Activated CD8-positive, alpha-beta T cell treated with anti-CD3 and anti-CD28 coated beads for 36 hours (primary cell): ENCODE measurements at regions of chr11 and their contacts with region 1.

Region 1: DNA sequence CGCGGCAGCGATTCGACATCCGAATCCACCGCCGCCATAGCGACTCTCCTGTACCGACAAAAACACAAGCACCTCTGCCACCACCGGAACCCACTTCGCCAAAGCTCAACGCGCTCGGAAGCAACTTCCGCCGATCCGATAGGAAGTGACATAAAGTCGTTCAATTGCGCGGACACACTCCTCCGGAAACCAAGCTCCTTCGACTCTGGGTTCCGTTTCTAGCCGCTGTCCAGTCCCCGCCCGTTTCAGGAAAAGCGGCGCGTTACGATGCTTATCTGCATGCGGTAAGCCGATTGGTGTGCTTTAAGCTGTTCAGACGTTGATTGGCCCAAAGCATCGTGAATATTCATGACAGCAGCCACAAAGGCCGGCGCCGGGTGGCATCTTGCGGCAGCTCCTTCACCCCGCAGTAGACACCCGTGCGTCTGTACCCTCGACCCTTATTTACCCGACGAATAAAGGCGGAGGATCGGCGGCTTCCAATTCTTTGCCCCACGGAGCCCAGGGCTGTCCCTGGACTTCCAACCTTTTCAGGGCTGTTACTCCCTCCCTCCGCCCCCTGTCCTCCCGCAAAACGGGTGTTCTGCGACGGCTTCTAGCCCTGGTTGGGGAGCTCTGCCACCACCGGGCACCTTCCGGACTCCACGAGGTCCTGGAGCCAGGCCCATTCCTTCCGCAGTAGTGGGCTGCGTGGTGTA is at the start of gene TUT1:
- DNase-seq: peak; percentile 98
- ATAC-seq: peak; percentile 91
- H3K4me3 Mint-ChIP-seq: peak within 1 kb of the TSS; percentile 100
- H3K27ac Mint-ChIP-seq: peak within 1 kb of the TSS; percentile 98
- H3K4me1 Mint-ChIP-seq: peaks cover 49% of the 10 kb centered on the region
- H3K27me3 Mint-ChIP-seq: no peaks in the 10 kb centered on the region
- CTCF ChIP-seq: no peak
- total RNA-seq, gene TUT1: 34.4 to 38.0 TPM

Region 2: DNA sequence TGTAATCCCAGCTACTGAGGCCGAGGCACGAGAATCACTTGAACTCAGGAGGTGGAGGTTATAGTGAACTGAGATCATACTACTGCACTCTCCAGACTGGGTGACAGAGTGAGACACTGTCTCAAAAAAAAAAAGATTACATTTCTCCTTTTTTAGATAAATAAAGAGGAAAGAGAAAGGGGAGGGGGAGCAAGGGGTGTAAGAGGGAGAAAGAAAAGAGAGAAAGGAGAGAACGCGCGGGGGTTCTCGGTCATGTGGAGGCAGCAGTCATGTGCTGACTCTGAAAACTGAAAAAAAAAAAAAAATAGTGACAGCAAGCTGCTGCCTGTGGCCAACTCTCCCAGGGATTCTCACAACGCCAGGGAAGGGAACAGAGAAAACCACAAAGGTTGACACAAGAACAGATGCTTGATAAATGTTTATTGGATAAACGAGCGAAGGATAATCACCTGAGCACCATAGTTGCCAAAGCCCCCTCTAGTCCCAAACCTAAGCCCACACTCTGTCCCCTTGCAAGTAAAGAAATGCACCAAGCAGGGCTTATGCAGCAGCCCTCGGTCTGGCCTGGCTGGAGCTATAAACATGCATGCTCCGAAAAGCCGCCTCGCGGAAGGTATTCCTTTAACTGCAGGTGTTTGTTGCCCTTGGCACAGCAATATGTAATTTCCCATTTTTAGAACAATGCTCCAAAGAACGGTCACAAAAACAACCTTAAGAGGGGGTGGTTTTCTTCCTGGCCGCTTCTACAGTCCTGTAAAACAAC is 158.3 kb before region 1 on chr11:
- CTCF ChIA-PET with region 1: no interaction called
- POLR2A ChIA-PET with region 1: no interaction called
- intact Hi-C with region 1: no loop called
- DNase-seq: no peak
- ATAC-seq: no peak
- H3K4me3 Mint-ChIP-seq: no peak overlapping the region
- H3K27ac Mint-ChIP-seq: no peak overlapping the region
- H3K4me1 Mint-ChIP-seq: peaks cover 31% of the 10 kb centered on the region
- H3K27me3 Mint-ChIP-seq: peaks cover 2% of the 10 kb centered on the region
- CTCF ChIP-seq: no peak

Region 3: DNA sequence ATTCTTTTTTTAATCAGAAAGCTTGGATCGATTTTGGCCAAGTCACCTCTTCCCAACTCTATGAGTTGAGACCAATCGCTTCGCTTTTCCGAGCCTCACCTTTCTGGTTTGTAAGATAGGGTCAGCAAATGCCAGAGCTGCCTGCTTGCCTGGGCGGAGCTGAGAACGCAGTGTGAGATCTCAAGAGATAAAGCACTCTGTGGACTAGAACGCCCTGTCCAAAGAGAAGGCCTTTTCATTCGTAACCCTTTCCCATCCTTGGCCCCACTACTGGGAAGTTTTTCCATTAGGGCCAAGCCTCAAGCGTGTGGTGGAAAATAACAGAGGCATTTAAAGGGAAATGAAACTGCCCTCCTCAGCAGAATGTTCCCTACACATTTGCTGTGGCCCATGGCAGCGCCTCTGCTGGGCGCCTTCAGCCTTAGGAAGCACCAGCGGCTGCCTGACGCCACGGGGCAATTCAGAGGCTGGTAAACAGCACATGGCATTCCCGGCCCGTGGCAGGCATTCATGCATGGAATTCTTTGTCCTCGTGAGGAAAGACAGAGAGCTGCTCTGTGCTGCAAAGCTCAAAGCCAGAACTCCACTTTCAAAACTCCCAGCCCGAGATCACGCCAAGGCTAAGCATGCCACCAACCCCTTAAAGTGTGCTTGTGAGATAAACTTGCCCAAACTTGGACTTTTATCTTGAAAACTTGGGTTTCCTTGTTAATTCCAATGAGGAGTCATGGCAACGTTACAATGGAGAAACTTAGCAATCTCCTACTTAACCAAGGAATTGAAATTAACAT is 83.1 kb before region 1 on chr11:
- CTCF ChIA-PET with region 1: no interaction called
- POLR2A ChIA-PET with region 1: no interaction called
- intact Hi-C with region 1: no loop called
- DNase-seq: peak; percentile 7
- ATAC-seq: no peak
- H3K4me3 Mint-ChIP-seq: no peak overlapping the region
- H3K27ac Mint-ChIP-seq: no peak overlapping the region
- H3K4me1 Mint-ChIP-seq: no peaks in the 10 kb centered on the region
- H3K27me3 Mint-ChIP-seq: peaks cover 7% of the 10 kb centered on the region
- CTCF ChIP-seq: peak; percentile 22

Region 4: DNA sequence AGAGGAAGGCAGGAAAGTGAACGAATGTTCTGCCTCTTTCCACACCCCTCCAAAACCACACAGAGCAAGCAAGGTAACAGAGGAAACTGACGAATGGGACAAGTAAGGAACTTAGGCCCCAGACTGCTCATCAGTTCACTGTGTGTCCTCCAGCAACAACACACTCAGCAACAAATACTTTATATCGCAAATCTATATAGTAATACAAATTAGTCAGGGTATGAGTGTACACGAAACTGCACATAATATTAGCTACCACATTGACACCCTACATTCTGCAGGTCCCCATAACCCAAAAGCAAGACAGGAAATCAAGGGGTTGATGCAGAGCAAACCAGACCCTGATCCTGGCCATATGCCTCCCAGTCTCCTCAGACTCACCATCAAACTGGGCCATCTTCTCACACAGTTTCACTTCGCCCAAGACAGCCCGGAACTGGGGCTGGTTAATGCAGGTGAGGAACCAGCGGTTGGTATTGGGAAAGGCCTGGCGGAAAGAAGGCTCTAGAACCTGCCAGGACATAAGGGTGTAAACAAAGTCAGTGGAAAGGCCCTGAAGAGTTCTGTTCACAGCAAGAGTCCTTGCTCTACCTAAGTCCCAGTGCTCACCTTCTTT is 24.5 kb before region 1 on chr11:
- CTCF ChIA-PET with region 1: interaction called, 8 read pairs
- POLR2A ChIA-PET with region 1: interaction called, 15 read pairs
- intact Hi-C with region 1: no loop called
- DNase-seq: no peak
- ATAC-seq: peak; percentile 49
- H3K4me3 Mint-ChIP-seq: no peak overlapping the region
- H3K27ac Mint-ChIP-seq: peak overlapping the region; percentile 61
- H3K4me1 Mint-ChIP-seq: peaks cover 57% of the 10 kb centered on the region
- H3K27me3 Mint-ChIP-seq: no peaks in the 10 kb centered on the region
- CTCF ChIP-seq: no peak

Region 5: GRCh38 chr11:62621567-62622470 is 30.2 kb after region 1 on chr11 and contains the start of gene B3GAT3:
- CTCF ChIA-PET with region 1: interaction called, 3 read pairs
- POLR2A ChIA-PET with region 1: interaction called, 19 read pairs
- intact Hi-C with region 1: no loop called
- DNase-seq: peak; percentile 98
- ATAC-seq: peak; percentile 94
- H3K4me3 Mint-ChIP-seq: peak within 1 kb of the TSS; percentile 88
- H3K27ac Mint-ChIP-seq: peak within 1 kb of the TSS; percentile 91
- H3K4me1 Mint-ChIP-seq: peaks cover 24% of the 10 kb centered on the region
- H3K27me3 Mint-ChIP-seq: no peaks in the 10 kb centered on the region
- CTCF ChIP-seq: no peak
- total RNA-seq, gene B3GAT3: 59.1 to 61.4 TPM

Region 6: DNA sequence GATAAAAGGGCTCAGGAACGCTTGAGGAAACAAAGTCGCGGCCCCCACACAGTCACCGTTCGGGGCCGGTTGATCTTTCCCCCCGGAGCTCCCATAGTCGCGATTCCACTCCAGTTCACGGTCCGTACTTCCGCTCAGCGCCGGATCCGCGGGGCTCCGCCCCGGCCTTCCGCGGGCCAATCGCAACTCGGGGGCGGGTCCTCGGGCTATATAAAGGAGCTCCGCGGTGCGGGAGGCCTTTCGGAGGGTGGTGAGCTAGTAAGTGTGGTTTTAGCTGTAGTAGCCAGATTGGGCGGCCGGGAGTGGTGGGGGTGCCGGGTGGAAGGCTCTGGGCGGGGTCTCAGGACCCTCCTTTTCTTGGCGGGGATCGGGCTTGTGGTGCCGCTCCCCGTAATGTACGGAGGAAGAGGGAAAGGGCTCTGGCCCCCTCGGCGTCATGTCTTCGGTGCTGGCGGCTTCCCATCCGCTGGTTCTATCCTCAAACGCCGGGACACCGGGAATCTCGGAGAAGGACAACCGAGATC is 73.5 kb after region 1 on chr11 and contains the starts of genes C11orf98 and CSKMT:
- CTCF ChIA-PET with region 1: interaction called, 20 read pairs
- POLR2A ChIA-PET with region 1: interaction called, 79 read pairs
- intact Hi-C with region 1: loop called (anchors 5 kb)
- DNase-seq: peak; percentile 96
- ATAC-seq: peak; percentile 89
- H3K4me3 Mint-ChIP-seq: peak within 1 kb of the TSS; percentile 98
- H3K27ac Mint-ChIP-seq: peak within 1 kb of the TSS; percentile 92
- H3K4me1 Mint-ChIP-seq: peaks cover 33% of the 10 kb centered on the region
- H3K27me3 Mint-ChIP-seq: no peaks in the 10 kb centered on the region
- CTCF ChIP-seq: no peak
- total RNA-seq, gene C11orf98: 108 TPM
- total RNA-seq, gene CSKMT: 37.1 to 43.6 TPM

Region 7: GRCh38 chr11:62694455-62695167 is 103.0 kb after region 1 on chr11:
- CTCF ChIA-PET with region 1: interaction called, 24 read pairs
- POLR2A ChIA-PET with region 1: interaction called, 6 read pairs
- intact Hi-C with region 1: no loop called
- DNase-seq: peak; percentile 87
- ATAC-seq: peak; percentile 84
- H3K4me3 Mint-ChIP-seq: no peak overlapping the region
- H3K27ac Mint-ChIP-seq: no peak overlapping the region
- H3K4me1 Mint-ChIP-seq: peaks cover 7% of the 10 kb centered on the region
- H3K27me3 Mint-ChIP-seq: no peaks in the 10 kb centered on the region
- CTCF ChIP-seq: peak; percentile 92

Region 8: GRCh38 chr11:62719302-62719978 is 127.8 kb after region 1 on chr11:
- CTCF ChIA-PET with region 1: no interaction called
- POLR2A ChIA-PET with region 1: no interaction called
- intact Hi-C with region 1: no loop called
- DNase-seq: no peak
- ATAC-seq: peak; percentile 13
- H3K4me3 Mint-ChIP-seq: no peak overlapping the region
- H3K27ac Mint-ChIP-seq: peak overlapping the region; percentile 62
- H3K4me1 Mint-ChIP-seq: peaks cover 53% of the 10 kb centered on the region
- H3K27me3 Mint-ChIP-seq: no peaks in the 10 kb centered on the region
- CTCF ChIP-seq: no peak

Region 9: DNA sequence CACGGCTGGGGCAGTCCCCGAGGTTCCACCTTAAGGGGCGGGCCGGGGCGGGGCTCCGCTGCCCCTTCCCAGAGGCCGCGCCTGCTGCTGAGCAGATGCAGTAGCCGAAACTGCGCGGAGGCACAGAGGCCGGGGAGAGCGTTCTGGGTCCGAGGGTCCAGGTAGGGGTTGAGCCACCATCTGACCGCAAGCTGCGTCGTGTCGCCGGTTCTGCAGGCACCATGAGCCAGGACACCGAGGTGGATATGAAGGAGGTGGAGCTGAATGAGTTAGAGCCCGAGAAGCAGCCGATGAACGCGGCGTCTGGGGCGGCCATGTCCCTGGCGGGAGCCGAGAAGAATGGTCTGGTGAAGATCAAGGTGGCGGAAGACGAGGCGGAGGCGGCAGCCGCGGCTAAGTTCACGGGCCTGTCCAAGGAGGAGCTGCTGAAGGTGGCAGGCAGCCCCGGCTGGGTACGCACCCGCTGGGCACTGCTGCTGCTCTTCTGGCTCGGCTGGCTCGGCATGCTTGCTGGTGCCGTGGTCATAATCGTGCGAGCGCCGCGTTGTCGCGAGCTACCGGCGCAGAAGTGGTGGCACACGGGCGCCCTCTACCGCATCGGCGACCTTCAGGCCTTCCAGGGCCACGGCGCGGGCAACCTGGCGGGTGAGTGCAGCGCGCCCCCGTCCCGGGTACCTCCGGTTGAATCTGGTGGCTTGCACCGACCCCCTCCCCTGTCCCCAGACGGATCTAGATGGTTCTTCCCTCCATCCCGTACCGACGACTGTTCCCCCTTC is 289.4 kb after region 1 on chr11 and contains the start of gene SLC3A2:
- CTCF ChIA-PET with region 1: no interaction called
- POLR2A ChIA-PET with region 1: interaction called, 10 read pairs
- intact Hi-C with region 1: no loop called
- DNase-seq: peak; percentile 91
- ATAC-seq: peak; percentile 76
- H3K4me3 Mint-ChIP-seq: peak within 1 kb of the TSS; percentile 99
- H3K27ac Mint-ChIP-seq: peak within 1 kb of the TSS; percentile 100
- H3K4me1 Mint-ChIP-seq: peaks cover 41% of the 10 kb centered on the region
- H3K27me3 Mint-ChIP-seq: no peaks in the 10 kb centered on the region
- CTCF ChIP-seq: peak; percentile 71
- total RNA-seq, gene SLC3A2: 299 to 315 TPM